ENCODE measurements at regions of chr11 and their contacts with region 1.

Region 1: DNA sequence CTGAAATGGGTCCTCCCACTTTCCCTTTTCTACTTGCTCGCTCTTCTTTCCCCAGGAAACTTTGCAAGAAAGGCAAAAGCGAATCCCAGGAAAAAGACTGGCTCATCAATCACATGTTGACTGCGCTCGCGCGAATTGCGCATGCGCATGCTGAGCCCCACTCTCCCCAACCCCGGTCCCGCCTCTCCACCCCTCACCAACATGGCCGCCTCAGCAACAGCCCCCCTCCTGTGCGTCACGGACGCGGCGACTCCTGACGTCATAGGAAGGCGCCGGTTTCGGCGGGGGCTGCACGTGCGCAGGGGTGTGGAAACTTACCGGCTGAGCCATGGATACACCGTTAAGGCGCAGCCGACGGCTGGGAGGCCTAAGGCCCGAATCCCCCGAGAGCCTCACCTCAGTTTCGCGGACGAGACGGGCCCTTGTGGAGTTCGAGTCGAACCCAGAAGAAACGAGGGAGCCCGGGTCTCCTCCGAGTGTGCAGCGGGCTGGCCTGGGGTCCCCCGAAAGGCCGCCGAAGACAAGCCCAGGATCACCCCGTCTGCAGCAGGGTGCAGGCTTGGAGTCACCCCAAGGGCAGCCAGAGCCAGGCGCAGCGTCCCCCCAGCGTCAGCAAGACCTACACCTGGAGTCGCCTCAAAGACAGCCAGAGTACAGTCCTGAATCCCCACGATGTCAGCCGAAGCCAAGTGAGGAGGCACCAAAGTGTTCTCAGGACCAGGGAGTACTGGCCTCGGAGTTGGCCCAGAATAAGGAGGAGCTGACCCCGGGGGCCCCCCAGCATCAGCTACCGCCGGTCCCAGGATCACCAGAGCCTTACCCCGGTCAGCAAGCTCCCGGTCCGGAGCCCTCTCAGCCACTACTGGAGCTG is at the start of gene CCDC86:
- DNase-seq: peak; percentile 96 to 100 (median 99)
- ATAC-seq: peak; percentile 99
- H3K4me3 ChIP-seq: peak within 1 kb of the TSS; percentile 93
- H3K4me3 Mint-ChIP-seq: peak within 1 kb of the TSS; percentile 89 to 95 (median 91)
- H3K27ac ChIP-seq: peak within 1 kb of the TSS; percentile 78
- H3K27ac Mint-ChIP-seq: peak within 1 kb of the TSS; percentile 87 to 99 (median 95)
- H3K4me1 ChIP-seq: peaks cover 26 to 35% of the 10 kb centered on the region in 2 donors
- H3K4me1 Mint-ChIP-seq: peaks cover 31 to 49% (median 44%) of the 10 kb centered on the region in 7 donors
- H3K27me3 ChIP-seq: no peaks in the 10 kb centered on the region
- H3K27me3 Mint-ChIP-seq: peaks cover 0 to 2% (median 0%) of the 10 kb centered on the region in 5 donors
- total RNA-seq, gene CCDC86: 9.1 to 26.2 (median 11.6) TPM

Region 2: GRCh38 chr11:60906132-60906972 is 64.3 kb after region 1 on chr11 and contains the start of gene PRPF19:
- CTCF ChIA-PET with region 1: no interaction called
- POLR2A ChIA-PET with region 1: interaction called, 6 read pairs
- intact Hi-C with region 1: loop called (anchors 1 kb)
- DNase-seq: peak; percentile 98 to 100 (median 99)
- ATAC-seq: peak; percentile 96
- H3K4me3 ChIP-seq: peak within 1 kb of the TSS; percentile 89
- H3K4me3 Mint-ChIP-seq: peak within 1 kb of the TSS; percentile 84 to 95 (median 91)
- H3K27ac ChIP-seq: peak within 1 kb of the TSS; percentile 88
- H3K27ac Mint-ChIP-seq: peak within 1 kb of the TSS; percentile 95 to 100 (median 98)
- H3K4me1 ChIP-seq: peaks cover 22 to 26% of the 10 kb centered on the region in 2 donors
- H3K4me1 Mint-ChIP-seq: peaks cover 34 to 69% (median 58%) of the 10 kb centered on the region in 7 donors
- H3K27me3 ChIP-seq: no peaks in the 10 kb centered on the region
- H3K27me3 Mint-ChIP-seq: peaks cover 0 to 11% (median 0%) of the 10 kb centered on the region in 5 donors
- total RNA-seq, gene PRPF19: 72.8 to 139 (median 85.6) TPM

Region 3: GRCh38 chr11:60951899-60952741 is 110.1 kb after region 1 on chr11 and contains the start of gene SLC15A3:
- CTCF ChIA-PET with region 1: interaction called, 3 read pairs
- POLR2A ChIA-PET with region 1: no interaction called
- intact Hi-C with region 1: loop called in 1 of 2 experiments (anchors 2 kb)
- DNase-seq: peak in 7 of 9 donors; percentile 55 to 66 (median 64)
- ATAC-seq: peak; percentile 73
- H3K4me3 ChIP-seq: peak within 1 kb of the TSS; percentile 58
- H3K4me3 Mint-ChIP-seq: peak within 1 kb of the TSS; percentile 83 to 96 (median 90)
- H3K27ac ChIP-seq: peak within 1 kb of the TSS; percentile 67
- H3K27ac Mint-ChIP-seq: peak within 1 kb of the TSS; percentile 81 to 97 (median 96)
- H3K4me1 ChIP-seq: peaks cover 0 to 21% of the 10 kb centered on the region in 2 donors
- H3K4me1 Mint-ChIP-seq: peaks cover 16 to 44% (median 40%) of the 10 kb centered on the region in 7 donors
- H3K27me3 ChIP-seq: no peaks in the 10 kb centered on the region
- H3K27me3 Mint-ChIP-seq: peaks cover 0 to 44% (median 0%) of the 10 kb centered on the region in 5 donors
- total RNA-seq, gene SLC15A3: 2.9 to 101 (median 10.8) TPM

Region 4: DNA sequence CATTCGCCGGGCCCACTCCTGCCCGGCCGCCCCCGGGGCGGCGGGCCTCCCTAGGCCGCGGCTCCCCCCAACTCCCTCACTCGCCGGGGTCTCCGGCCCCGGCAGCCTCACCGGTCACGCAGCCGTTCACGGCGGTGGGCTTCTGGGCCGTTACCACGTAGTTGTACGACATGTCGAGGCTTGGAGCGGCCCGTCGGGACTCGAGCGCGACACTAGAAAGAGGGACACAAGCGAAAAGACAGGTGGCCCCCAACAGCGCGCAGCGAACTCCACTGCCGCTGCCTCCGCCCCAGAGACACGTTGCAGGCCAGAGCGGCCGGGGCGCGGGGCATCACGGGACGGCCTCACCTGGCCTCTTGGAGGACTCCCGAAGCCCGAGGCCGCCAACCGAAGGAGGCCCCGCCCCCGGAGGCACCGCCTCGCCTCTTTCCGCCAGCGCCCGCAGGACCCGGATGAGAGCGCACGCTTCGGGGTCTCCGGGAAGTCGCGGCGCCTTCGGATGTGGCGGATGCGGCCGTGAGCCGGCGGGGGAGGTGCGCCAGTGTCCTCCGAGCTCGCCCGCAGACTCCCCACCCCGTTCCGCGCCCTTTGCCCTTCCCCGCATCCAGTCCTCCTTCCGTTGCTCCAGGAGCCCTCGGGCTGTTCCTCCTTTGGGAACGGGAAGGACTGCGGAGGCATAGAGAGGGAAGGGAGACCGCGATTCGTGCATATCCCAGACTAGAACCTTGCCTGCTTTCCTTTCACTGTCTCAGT is 490.9 kb after region 1 on chr11 and contains the starts of genes DDB1 and TKFC:
- CTCF ChIA-PET with region 1: interaction called, 5 read pairs
- POLR2A ChIA-PET with region 1: no interaction called
- intact Hi-C with region 1: loop called in 1 of 2 experiments (anchors 2 kb)
- DNase-seq: peak; percentile 91 to 99 (median 97)
- ATAC-seq: peak; percentile 96
- H3K4me3 ChIP-seq: peak within 1 kb of the TSS; percentile 84
- H3K4me3 Mint-ChIP-seq: peak within 1 kb of the TSS; percentile 83 to 100 (median 95)
- H3K27ac ChIP-seq: peak within 1 kb of the TSS; percentile 99
- H3K27ac Mint-ChIP-seq: peak within 1 kb of the TSS; percentile 91 to 100 (median 98)
- H3K4me1 ChIP-seq: peaks cover 27 to 30% of the 10 kb centered on the region in 2 donors
- H3K4me1 Mint-ChIP-seq: peaks cover 33 to 67% (median 64%) of the 10 kb centered on the region in 7 donors
- H3K27me3 ChIP-seq: no peaks in the 10 kb centered on the region
- H3K27me3 Mint-ChIP-seq: no peaks in the 10 kb centered on the region
- total RNA-seq, gene DDB1: 153 to 213 (median 160) TPM
- total RNA-seq, gene TKFC: 36.9 to 59.9 (median 43.3) TPM

Region 5: DNA sequence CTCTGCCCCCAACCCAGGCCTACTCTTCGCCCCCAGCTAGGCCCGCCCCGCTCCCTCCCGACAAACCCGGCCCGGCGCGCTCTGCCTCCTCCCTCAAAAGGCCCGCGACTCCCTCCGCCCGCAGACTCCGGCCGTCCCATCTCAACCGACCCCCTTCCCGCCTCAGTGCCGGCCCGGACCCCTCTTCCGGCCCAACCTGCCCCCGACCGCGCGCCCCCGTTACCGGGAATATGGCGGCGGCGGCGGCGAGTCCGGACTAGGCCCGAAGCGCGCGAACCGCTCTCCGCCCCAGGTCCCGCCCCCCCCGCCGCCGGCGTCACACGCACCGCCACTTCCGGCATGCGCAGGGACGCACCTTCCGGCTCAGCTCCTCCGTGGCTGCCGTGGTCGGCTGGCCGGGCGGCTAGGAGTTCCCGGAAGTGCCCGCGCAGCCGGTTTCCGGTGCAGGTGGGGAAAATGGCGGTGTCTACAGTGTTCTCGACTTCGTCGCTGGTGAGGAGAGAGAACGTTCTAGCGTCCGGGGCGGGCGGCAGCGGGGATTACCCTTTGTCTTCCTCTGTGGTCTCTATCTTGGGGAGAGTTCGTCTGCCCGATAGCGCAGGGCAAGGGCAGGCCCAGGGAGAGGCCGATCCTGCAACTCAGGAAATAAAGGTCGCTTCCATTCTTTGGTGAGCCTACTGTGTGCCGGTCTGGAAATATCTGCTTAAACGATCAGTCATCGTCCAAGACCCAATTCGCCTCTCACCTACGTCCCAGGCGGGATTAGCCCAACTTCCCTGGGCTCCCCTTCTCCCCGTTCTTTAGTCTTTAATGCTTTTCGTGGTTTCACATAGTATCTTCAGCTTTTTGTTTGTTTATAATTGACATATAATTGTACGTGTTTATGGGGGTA is 587.9 kb after region 1 on chr11 and contains the starts of genes CPSF7 and SDHAF2:
- CTCF ChIA-PET with region 1: no interaction called
- POLR2A ChIA-PET with region 1: no interaction called
- intact Hi-C with region 1: loop called in 1 of 2 experiments (anchors 5 kb)
- DNase-seq: peak; percentile 96 to 99 (median 97)
- ATAC-seq: peak; percentile 93
- H3K4me3 ChIP-seq: peak within 1 kb of the TSS; percentile 91
- H3K4me3 Mint-ChIP-seq: peak within 1 kb of the TSS; percentile 89 to 100 (median 97)
- H3K27ac ChIP-seq: peak within 1 kb of the TSS; percentile 98
- H3K27ac Mint-ChIP-seq: peak within 1 kb of the TSS; percentile 97 to 100 (median 99)
- H3K4me1 ChIP-seq: peaks cover 20 to 33% of the 10 kb centered on the region in 2 donors
- H3K4me1 Mint-ChIP-seq: peaks cover 31 to 86% (median 69%) of the 10 kb centered on the region in 7 donors
- H3K27me3 ChIP-seq: no peaks in the 10 kb centered on the region
- H3K27me3 Mint-ChIP-seq: peaks cover 0 to 2% (median 0%) of the 10 kb centered on the region in 5 donors
- total RNA-seq, gene CPSF7: 96.0 to 174 (median 113) TPM
- total RNA-seq, gene SDHAF2: 36.1 to 56.6 (median 48.2) TPM

Region 6: GRCh38 chr11:62123669-62124185 is 1281.7 kb after region 1 on chr11 and contains the start of gene INCENP:
- CTCF ChIA-PET with region 1: no interaction called
- POLR2A ChIA-PET with region 1: no interaction called
- intact Hi-C with region 1: loop called in 1 of 2 experiments (anchors 5 kb)
- DNase-seq: peak; percentile 75 to 97 (median 95)
- ATAC-seq: peak; percentile 100
- H3K4me3 ChIP-seq: peak within 1 kb of the TSS; percentile 87
- H3K4me3 Mint-ChIP-seq: peak within 1 kb of the TSS; percentile 89 to 95 (median 94)
- H3K27ac ChIP-seq: peak within 1 kb of the TSS; percentile 81
- H3K27ac Mint-ChIP-seq: peak within 1 kb of the TSS; percentile 53 to 95 (median 91)
- H3K4me1 ChIP-seq: peaks cover 6 to 9% of the 10 kb centered on the region in 2 donors
- H3K4me1 Mint-ChIP-seq: peaks cover 22 to 40% (median 28%) of the 10 kb centered on the region in 7 donors
- H3K27me3 ChIP-seq: no peaks in the 10 kb centered on the region
- H3K27me3 Mint-ChIP-seq: peaks cover 0 to 15% (median 0%) of the 10 kb centered on the region in 5 donors
- total RNA-seq, gene INCENP: 18.6 to 124 (median 25.6) TPM